HAP-1 (cell line): ENCODE measurements at regions of chr1 and their contacts with region 1.

Region 1: DNA sequence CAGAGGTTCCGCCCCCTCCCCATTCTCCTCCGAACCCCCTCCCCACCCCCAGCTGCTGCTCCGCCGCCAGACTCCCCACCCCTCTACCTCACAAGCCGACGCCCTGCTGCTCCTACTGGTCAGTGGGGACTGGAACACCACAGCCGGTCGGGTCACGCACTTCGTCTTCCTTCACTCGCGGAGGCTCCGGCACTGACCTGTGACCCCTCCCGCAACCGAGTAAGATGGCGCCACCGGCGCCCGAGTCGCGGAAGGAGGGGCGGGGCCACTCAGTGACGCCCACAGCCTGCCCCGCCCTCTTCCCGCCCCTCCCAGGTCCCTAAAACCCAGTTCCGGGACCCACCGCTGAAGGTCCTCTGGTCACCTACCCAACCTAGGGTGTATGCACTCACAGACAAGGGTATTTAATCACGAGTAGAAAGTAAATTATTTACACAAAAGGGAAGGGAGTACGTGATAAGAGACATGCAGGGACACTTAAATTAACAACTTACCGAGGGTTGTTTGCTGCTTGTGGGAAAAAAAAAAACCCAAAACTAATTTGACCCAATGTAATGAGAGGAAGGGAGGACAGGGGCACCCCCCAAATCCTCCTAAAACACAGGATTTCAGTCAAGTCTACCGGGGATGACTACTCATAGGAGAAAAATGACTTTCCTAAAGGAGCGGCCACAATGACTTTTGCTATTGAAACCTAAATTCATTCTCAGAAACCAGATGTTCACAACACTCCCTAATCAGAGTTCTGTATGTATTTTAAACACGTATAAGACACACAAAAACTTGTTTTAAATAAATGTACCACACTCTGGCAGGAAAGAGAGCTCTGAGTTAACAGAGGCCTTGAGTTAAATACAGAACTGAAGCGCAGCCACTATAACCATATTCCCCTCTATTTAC is at the start of gene RIT1:
- DNase-seq: peak; percentile 70 to 93
- H3K4me3 ChIP-seq: peak within 1 kb of the TSS; percentile 52
- H3K4me1 ChIP-seq: peaks cover 7% of the 10 kb centered on the region; the same call in 1 of the 2 replicates
- H3K27me3 ChIP-seq: no peaks in the 10 kb centered on the region

Region 2: DNA sequence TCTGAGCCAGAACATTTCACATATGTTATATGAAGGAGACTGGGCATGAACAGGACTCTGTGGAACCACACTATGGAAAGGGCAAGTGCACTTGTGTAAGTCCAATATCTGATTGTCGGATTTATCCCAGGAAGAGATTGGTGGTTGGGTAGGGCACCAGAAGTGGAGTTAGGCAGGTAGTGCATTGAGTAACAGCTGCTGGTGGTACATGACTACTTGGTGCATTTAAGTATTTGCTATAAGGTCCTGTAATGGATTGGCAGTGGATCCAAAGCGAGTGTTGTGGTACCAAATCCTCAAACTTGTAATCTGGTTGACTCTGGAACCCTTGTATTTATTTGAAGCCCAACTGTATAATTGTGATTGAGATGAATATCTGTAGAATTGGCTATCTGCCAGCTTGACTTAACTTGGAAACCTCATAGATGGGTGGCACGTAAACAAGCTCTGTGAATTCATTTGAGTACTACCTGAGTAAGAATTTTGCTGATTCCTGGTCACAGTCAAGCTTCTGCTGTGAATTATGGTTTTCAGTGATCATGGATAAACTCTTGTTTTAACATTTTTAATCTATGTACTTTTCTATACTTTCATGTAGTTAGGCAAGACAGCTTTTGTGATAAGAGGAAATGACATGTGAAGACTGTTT is 1669.6 kb before region 1 on chr1:
- in situ Hi-C with region 1: loop called (anchors 25 kb)
- DNase-seq: no peak
- H3K4me3 ChIP-seq: no peak overlapping the region
- H3K4me1 ChIP-seq: no peaks in the 10 kb centered on the region
- H3K27me3 ChIP-seq: no peaks in the 10 kb centered on the region

Region 3: GRCh38 chr1:155569988-155570592 is 341.3 kb before region 1 on chr1:
- in situ Hi-C with region 1: no loop called
- DNase-seq: no peak
- H3K4me3 ChIP-seq: no peak overlapping the region
- H3K4me1 ChIP-seq: peaks cover 5% of the 10 kb centered on the region; the same call in 1 of the 2 replicates
- H3K27me3 ChIP-seq: no peaks in the 10 kb centered on the region

Region 4: DNA sequence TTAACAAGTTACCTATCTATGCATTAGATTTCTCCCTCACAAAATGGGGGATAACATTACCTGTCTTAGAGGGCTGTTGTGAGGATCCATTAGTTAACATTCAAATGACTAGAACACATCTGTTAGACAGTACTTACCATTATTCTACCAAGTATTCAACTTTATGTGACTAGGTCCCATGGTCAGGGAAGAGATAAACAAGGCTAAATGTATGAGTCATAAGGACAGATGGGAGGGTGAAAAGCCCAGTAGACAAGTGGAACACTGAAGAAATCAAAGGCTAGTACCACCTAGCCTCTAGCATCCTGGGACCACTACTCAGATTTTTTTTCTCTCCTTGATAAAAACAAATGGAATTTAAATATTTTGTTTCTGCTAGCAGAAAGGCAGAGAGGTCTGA is 396.7 kb after region 1 on chr1:
- in situ Hi-C with region 1: loop called (anchors 10 kb)
- DNase-seq: no peak
- H3K4me3 ChIP-seq: no peak overlapping the region
- H3K4me1 ChIP-seq: no peaks in the 10 kb centered on the region
- H3K27me3 ChIP-seq: no peaks in the 10 kb centered on the region